Right cardiac atrium (tissue), 5 donors: ENCODE measurements at regions of chr2 and their contacts with region 1.

Region 1: GRCh38 chr2:202056392-202057010 is 16.6 kb upstream of the KIAA2012 start:
- DNase-seq: no peak
- ATAC-seq: no peak
- H3K4me3 ChIP-seq: no peak overlapping the region
- H3K27ac ChIP-seq: no peak overlapping the region
- H3K4me1 ChIP-seq: no peaks in the 10 kb centered on the region
- H3K27me3 ChIP-seq: no peaks in the 10 kb centered on the region

Region 2: DNA sequence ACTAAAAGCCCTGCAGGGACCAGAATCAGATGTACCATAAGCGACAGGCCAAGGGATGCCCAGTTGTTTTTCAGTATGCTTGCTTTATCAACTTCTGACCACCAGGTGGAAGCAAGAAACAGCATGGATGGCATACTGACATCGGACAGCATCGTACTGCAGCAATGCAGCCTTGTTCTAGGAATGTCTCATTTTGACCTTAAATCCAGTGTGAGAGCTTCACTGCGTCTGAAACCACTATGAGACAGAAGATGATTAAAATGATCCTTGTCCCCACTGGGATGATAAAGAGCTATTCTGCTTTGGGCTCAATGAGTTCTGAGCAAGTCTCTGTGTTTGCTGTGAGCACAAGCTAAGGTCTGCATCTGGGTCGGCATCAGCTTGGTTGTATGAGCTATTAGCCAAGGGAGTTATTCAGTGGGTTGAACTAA is 195.8 kb before region 1 on chr2:
- intact Hi-C with region 1: loop called in 1 of 4 experiments (anchors 10 kb)
- DNase-seq: peak in 2 of 3 donors; percentile 19 to 55
- ATAC-seq: peak; percentile 82 to 89
- H3K4me3 ChIP-seq: no peak overlapping the region
- H3K27ac ChIP-seq: no peak overlapping the region
- H3K4me1 ChIP-seq: no peaks in the 10 kb centered on the region
- H3K27me3 ChIP-seq: no peaks in the 10 kb centered on the region

Region 3: GRCh38 chr2:202765436-202765835 is 708.9 kb after region 1 on chr2:
- intact Hi-C with region 1: no loop called
- DNase-seq: no peak
- ATAC-seq: no peak
- H3K4me3 ChIP-seq: no peak overlapping the region
- H3K27ac ChIP-seq: no peak overlapping the region
- H3K4me1 ChIP-seq: no peaks in the 10 kb centered on the region
- H3K27me3 ChIP-seq: no peaks in the 10 kb centered on the region